Stomach (tissue), 19 donors: ENCODE measurements at regions of chr5 and their contacts with region 1.

Region 1: GRCh38 chr5:74648835-74649293 is 8.3 kb upstream of the ENC1 start:
- DNase-seq: peak in 1 of 2 donors; percentile 87
- H3K4me3 ChIP-seq: no peak overlapping the region
- H3K27ac ChIP-seq: peak overlapping the region in 4 of 5 donors; percentile 20 to 60 (median 52)
- H3K4me1 ChIP-seq: peaks cover 0 to 35% (median 10%) of the 10 kb centered on the region in 4 donors
- H3K27me3 ChIP-seq: no peaks in the 10 kb centered on the region
- CTCF ChIP-seq: peak in 5 of 7 experiments; percentile 45 to 74 (median 63)
- EP300 ChIP-seq: no peak
- POLR2A ChIP-seq: no peak

Region 2: DNA sequence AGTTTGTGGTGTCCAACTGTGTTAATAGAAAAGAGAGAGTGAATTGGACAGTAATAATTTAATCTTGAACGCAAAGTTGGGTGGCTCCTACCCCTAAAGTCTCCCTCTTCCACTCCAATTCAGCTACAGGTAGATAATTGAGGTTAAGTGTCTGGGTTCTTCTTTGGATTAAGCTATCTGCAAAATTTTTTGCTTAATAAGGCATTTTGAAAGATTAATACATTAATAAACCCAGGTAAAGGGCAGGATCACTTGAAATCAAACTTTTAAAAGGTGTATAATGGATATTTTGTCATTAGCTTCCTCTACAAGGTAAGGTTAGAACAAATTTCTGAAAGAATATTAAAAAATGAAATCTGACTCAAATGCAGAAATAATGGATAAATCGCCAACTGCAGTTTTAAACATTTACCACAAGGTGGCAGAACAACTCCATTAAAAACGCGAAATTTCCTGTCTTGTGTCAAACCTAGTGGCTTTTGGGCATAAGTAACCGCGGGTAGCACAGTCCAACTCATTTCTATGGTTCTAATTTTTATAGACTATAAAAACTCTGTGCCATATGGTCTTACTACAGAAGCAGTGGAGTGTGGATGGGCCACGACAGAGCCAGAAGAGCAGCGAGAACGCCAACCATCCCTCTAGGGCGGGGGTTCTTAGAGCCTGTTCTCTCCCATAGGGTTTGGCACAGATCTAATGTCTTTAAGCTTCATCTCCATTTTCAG is 746.4 kb before region 1 on chr5:
- intact Hi-C with region 1: loop called (anchors 5 kb)
- DNase-seq: peak in 1 of 2 donors; percentile 84
- H3K4me3 ChIP-seq: no peak overlapping the region
- H3K27ac ChIP-seq: no peak overlapping the region
- H3K4me1 ChIP-seq: peaks cover 0 to 16% (median 9%) of the 10 kb centered on the region in 4 donors
- H3K27me3 ChIP-seq: no peaks in the 10 kb centered on the region
- CTCF ChIP-seq: peak in 5 of 7 experiments; percentile 78 to 94 (median 85)
- EP300 ChIP-seq: no peak
- POLR2A ChIP-seq: no peak

Region 3: DNA sequence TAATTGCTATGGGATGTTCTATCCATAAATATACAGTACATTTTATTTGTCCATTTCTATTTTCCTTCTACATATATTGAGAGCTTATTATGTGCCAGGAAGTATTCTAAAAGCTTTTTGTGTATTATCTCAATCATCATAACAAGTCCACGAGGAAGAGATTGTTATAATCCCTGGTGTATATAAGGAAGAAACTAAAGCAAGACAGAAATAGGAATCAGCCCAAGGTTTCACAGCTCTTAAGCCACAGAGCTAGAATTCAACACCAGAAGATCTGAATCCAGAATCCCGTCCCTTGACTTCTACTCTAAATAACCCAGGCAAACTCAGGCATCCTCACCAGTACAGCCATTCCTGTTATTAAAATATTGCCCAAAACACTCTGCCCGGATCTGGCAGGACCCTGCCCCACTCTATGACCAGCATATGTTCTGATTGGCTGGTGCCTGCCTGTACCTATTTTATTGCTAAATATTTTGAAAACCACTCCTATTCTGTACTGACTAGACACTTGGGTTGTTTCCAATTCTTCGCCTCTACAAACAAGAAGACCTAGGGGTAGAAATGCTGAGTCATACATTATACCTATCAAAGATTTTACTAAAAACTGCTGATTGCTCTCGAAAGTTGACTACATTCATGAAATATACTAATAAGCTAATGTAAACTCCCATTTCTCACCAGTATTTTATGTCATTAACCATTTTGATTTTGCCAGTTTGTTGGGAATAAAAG is 305.7 kb before region 1 on chr5:
- intact Hi-C with region 1: no loop called
- DNase-seq: no peak
- H3K4me3 ChIP-seq: no peak overlapping the region
- H3K27ac ChIP-seq: peak overlapping the region in 2 of 5 donors; percentile 17 to 58
- H3K4me1 ChIP-seq: peaks cover 0 to 11% (median 2%) of the 10 kb centered on the region in 4 donors
- H3K27me3 ChIP-seq: no peaks in the 10 kb centered on the region
- CTCF ChIP-seq: no peak
- EP300 ChIP-seq: no peak
- POLR2A ChIP-seq: no peak

Region 4: DNA sequence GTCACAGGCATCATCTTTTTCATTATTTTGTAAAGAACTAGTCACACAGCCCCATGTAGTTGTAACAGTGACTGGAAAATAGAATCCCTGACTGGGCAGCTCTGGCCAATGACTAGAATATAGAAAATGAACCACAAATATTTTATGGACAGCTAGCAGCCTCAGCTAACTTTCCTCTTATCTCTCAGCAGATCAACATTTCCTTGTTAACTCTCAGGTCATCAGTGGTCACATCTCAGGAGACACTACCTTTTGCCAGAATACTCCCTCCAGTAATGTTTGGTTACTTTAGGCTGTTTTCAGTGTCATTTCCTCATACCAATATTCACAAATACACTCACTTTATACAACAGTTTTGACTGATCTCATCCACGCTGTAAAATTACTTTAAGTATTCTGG is 173.4 kb after region 1 on chr5:
- intact Hi-C with region 1: no loop called
- DNase-seq: no peak
- H3K4me3 ChIP-seq: no peak overlapping the region
- H3K27ac ChIP-seq: no peak overlapping the region
- H3K4me1 ChIP-seq: no peaks in the 10 kb centered on the region
- H3K27me3 ChIP-seq: no peaks in the 10 kb centered on the region
- CTCF ChIP-seq: no peak
- EP300 ChIP-seq: no peak
- POLR2A ChIP-seq: no peak